Cardiac septum (tissue), 1 donor: ENCODE measurements at regions of chr11 and their contacts with region 1.

Region 1: DNA sequence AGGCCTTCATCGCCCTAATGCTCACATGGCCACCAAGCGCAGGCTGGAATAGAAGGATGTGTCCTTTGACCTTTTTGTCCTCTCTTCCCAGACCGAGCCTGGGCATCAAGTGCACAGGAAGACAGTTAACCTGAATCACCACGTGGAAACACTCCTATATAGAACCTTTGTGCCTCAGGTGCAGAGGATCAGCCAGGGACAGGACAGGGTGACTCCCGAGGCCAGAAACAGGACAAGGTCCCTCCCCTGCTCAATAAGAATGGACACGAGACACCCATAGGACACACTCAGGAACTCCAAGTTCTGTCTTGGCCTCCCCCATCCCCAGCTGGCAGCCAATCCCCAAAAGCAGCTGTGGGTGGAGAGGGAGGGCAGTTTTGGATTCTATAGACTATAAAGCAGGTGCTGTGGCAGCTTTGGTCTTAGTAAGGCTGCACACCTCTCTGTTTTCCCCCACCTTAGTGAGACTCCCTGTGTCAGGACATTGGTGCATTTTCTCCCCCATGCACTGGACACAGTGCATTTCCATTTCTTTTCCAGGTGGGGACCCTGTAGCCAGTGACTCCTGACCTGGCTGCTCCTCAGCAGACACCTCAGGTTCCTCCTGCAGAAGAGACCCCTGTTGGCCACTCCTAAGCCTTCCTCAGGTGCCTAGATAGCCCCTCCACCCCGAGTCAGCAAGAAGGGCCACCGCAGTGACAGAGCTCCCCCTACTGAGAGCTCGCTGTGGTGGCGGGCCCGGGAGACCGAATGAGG is 43.6 kb upstream of the POU2AF1 start:
- DNase-seq: no peak

Region 2: DNA sequence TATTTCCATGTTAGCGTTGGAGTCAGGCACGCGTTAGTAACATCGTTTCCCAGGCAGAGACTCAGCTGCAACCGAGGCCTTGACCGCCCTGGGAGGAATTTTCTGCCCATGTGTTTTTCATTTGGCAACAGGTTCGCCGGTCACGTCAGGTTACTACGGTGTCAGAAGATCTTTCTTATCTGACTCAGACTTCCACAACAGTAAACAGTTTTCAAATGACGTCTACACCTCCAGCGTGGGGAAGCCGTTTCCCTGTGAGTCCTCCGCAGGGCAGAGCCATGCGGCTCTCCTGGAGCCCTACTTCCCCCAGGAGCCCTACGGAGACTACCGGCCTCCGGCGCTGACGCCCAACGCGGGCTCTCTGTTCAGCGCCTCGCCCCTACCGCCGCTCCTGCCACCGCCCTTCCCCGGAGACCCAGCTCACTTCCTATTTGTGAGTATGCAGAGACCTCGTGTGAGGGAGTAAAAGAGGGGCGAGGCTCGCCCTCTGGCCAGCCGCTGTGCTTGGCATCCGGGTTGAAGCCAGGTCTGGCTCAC is 138.7 kb before region 1 on chr11:
- intact Hi-C with region 1: loop called (anchors 2 kb)
- DNase-seq: no peak

Region 3: GRCh38 chr11:111299101-111300026 is 123.3 kb before region 1 on chr11:
- intact Hi-C with region 1: loop called (anchors 5 kb)
- DNase-seq: no peak

Region 4: GRCh38 chr11:111601979-111602864 is 179.6 kb after region 1 on chr11 and contains the start of gene SIK2:
- intact Hi-C with region 1: no loop called
- DNase-seq: peak; percentile 93
- total RNA-seq, gene SIK2: 27.3 TPM